Sigmoid colon (tissue), 7 donors: ENCODE measurements at regions of chr2 and their contacts with region 1.

Region 1: DNA sequence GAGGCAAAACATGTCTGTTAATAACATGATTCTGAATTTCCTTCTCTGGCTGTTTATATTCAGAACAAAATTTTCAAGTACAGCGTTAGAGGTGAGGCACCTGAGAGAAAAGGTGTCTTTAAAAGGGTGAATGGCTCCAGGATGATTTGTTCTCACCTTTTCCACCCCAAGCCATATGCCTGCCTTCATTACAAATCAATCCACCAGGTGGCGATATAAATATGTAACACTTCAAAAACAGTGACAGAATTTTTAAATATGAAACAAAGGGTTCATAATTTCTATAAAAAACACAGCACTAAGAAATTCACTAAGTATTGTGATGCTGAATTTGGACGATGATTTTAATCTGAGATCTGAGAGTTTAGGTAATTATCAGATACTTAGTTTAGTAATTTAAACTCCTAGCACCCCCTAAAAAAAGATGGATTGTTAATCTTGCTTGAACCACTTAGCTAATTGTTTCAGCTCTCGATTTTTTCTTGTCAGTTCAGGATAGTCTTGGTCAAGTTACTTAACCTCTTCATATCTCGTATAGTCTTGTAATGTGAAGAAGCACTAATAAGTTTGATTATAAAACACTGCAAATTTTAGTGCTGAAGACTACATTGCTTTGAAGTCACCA is 528.8 kb downstream of the CPS1 start:
- DNase-seq: no peak
- H3K4me3 ChIP-seq: no peak overlapping the region
- H3K27ac ChIP-seq: no peak overlapping the region
- H3K4me1 ChIP-seq: peaks cover 0 to 9% (median 3%) of the 10 kb centered on the region in 4 donors
- H3K27me3 ChIP-seq: no peaks in the 10 kb centered on the region
- CTCF ChIP-seq: peak in 3 of 4 experiments; percentile 22 to 53 (median 32)
- EP300 ChIP-seq: no peak
- POLR2A ChIP-seq: no peak

Region 2: DNA sequence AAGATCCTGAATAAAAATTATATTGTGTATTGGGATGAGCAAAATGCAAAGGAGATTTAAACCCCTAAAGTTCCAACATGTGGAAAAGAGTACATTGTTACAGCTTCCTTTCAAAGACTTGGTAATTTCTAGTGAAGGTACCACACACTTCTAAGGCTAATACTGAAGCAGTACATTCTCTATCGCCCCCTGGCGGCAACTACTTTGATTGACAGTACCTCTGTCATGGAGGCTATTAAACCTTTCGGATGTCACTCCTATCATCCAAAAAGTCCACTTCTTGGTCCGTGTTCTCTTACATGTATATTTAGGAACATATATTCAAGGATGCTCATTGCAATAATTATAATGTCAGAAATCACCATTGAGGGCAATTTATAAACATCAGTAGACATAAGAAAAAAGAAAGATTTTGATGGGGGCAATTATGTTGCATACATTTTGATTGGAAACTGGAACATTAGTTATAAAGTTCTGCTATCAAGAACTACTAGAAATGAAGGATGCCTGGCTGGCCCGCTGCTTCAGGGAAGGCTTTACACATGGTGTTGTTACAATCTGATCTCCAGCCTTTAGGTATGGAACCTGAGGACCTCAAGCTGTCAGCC is 72.8 kb after region 1 on chr2:
- intact Hi-C with region 1: loop called (anchors 5 kb)
- DNase-seq: peak; percentile 64
- H3K4me3 ChIP-seq: no peak overlapping the region
- H3K27ac ChIP-seq: no peak overlapping the region
- H3K4me1 ChIP-seq: no peaks in the 10 kb centered on the region
- H3K27me3 ChIP-seq: no peaks in the 10 kb centered on the region
- CTCF ChIP-seq: peak; percentile 8 to 79 (median 52)
- EP300 ChIP-seq: no peak
- POLR2A ChIP-seq: no peak